ENCODE measurements at regions of chr18 and their contacts with region 1.

Region 1: DNA sequence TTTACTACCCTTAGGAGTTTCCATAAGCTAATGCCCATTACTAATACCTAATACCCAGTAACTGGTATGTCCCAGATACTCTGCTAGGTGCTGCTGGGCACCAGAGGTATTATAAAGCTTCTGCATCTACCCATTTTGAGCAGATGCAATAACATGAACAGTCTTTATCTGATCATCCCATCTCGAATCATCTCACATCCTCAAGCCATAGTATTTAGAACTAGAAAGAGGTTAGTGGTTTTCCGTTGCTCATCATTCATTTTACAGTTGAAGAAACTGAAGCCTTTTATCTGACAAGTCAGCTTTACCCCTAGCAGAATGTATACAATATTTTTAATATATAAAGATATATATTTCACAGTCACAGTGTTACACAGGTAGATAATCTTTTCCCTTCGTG is 99.1 kb upstream of the TCF4 start:
- DNase-seq: no peak
- H3K4me3 ChIP-seq: no peak overlapping the region
- H3K27ac ChIP-seq: no peak overlapping the region
- H3K4me1 ChIP-seq: no peaks in the 10 kb centered on the region
- CTCF ChIP-seq: no peak

Region 2: GRCh38 chr18:54616220-54616848 is 1070.8 kb before region 1 on chr18:
- CTCF ChIA-PET with region 1: no interaction called
- POLR2A ChIA-PET with region 1: interaction called, 10 read pairs
- intact Hi-C with region 1: no loop called
- DNase-seq: no peak
- H3K4me3 ChIP-seq: no peak overlapping the region
- H3K27ac ChIP-seq: no peak overlapping the region
- H3K4me1 ChIP-seq: no peaks in the 10 kb centered on the region
- CTCF ChIP-seq: no peak

Measured in OCI-LY7 (cell line).